ENCODE measurements at regions of chr9 and their contacts with region 1.

Region 1: GRCh38 chr9:26892251-26893029 is at the start of gene CAAP1:
- DNase-seq: peak; percentile 82 to 96 (median 89)
- ATAC-seq: peak; percentile 92
- H3K4me3 ChIP-seq: peak within 1 kb of the TSS; percentile 88
- H3K4me3 Mint-ChIP-seq: peak within 1 kb of the TSS; percentile 100
- H3K27ac ChIP-seq: peak within 1 kb of the TSS; percentile 94 to 95
- H3K27ac Mint-ChIP-seq: peak within 1 kb of the TSS; percentile 98
- H3K4me1 ChIP-seq: peaks cover 23% of the 10 kb centered on the region
- H3K4me1 Mint-ChIP-seq: peaks cover 49% of the 10 kb centered on the region
- H3K27me3 ChIP-seq: no peaks in the 10 kb centered on the region
- H3K27me3 Mint-ChIP-seq: no peaks in the 10 kb centered on the region
- CTCF ChIP-seq: peak; percentile 46
- total RNA-seq, gene CAAP1: 11.4 to 12.8 TPM

Region 2: GRCh38 chr9:26880262-26880661 is 12.2 kb before region 1 on chr9:
- CTCF ChIA-PET with region 1: no interaction called
- POLR2A ChIA-PET with region 1: no interaction called
- intact Hi-C with region 1: no loop called
- DNase-seq: no peak
- ATAC-seq: no peak
- H3K4me3 ChIP-seq: no peak overlapping the region
- H3K4me3 Mint-ChIP-seq: no peak overlapping the region
- H3K27ac ChIP-seq: no peak overlapping the region
- H3K27ac Mint-ChIP-seq: no peak overlapping the region
- H3K4me1 ChIP-seq: no peaks in the 10 kb centered on the region
- H3K4me1 Mint-ChIP-seq: no peaks in the 10 kb centered on the region
- H3K27me3 ChIP-seq: no peaks in the 10 kb centered on the region
- H3K27me3 Mint-ChIP-seq: no peaks in the 10 kb centered on the region
- CTCF ChIP-seq: no peak

Region 3: GRCh38 chr9:26946753-26947727 is 54.6 kb after region 1 on chr9 and contains the start of gene PLAA:
- CTCF ChIA-PET with region 1: interaction called, 18 read pairs
- POLR2A ChIA-PET with region 1: interaction called, 40 read pairs
- intact Hi-C with region 1: loop called (anchors 1 to 2 kb)
- DNase-seq: peak; percentile 65 to 93 (median 78)
- ATAC-seq: peak; percentile 94
- H3K4me3 ChIP-seq: peak within 1 kb of the TSS; percentile 94
- H3K4me3 Mint-ChIP-seq: peak within 1 kb of the TSS; percentile 99
- H3K27ac ChIP-seq: peak within 1 kb of the TSS; percentile 97 to 99
- H3K27ac Mint-ChIP-seq: peak within 1 kb of the TSS; percentile 100
- H3K4me1 ChIP-seq: peaks cover 24% of the 10 kb centered on the region
- H3K4me1 Mint-ChIP-seq: peaks cover 51% of the 10 kb centered on the region
- H3K27me3 ChIP-seq: no peaks in the 10 kb centered on the region
- H3K27me3 Mint-ChIP-seq: peaks cover 3% of the 10 kb centered on the region
- CTCF ChIP-seq: no peak
- total RNA-seq, gene PLAA: 30.1 to 34.1 TPM

Region 4: GRCh38 chr9:26955921-26956859 is 63.8 kb after region 1 on chr9 and contains the start of gene IFT74:
- CTCF ChIA-PET with region 1: interaction called, 16 read pairs
- POLR2A ChIA-PET with region 1: interaction called, 26 read pairs
- intact Hi-C with region 1: loop called in 1 of 2 experiments (anchors 1 kb)
- DNase-seq: peak; percentile 87 to 98 (median 92)
- ATAC-seq: peak; percentile 99
- H3K4me3 ChIP-seq: peak within 1 kb of the TSS; percentile 71
- H3K4me3 Mint-ChIP-seq: peak within 1 kb of the TSS; percentile 94
- H3K27ac ChIP-seq: peak within 1 kb of the TSS; percentile 48 to 73
- H3K27ac Mint-ChIP-seq: peak within 1 kb of the TSS; percentile 94
- H3K4me1 ChIP-seq: peaks cover 15% of the 10 kb centered on the region
- H3K4me1 Mint-ChIP-seq: peaks cover 33% of the 10 kb centered on the region
- H3K27me3 ChIP-seq: no peaks in the 10 kb centered on the region
- H3K27me3 Mint-ChIP-seq: no peaks in the 10 kb centered on the region
- CTCF ChIP-seq: no peak
- total RNA-seq, gene IFT74: 7.3 to 7.7 TPM